Naive thymus-derived CD4-positive, alpha-beta T cell (primary cell): ENCODE measurements at regions of chr4 and their contacts with region 1.

Region 1: GRCh38 chr4:76213415-76214176 is at the start of gene SCARB2:
- DNase-seq: peak; percentile 72 to 78 (median 74)
- ATAC-seq: peak; percentile 82
- H3K4me3 ChIP-seq: peak within 1 kb of the TSS; percentile 76
- H3K4me3 Mint-ChIP-seq: peak within 1 kb of the TSS; percentile 87 to 96 (median 94)
- H3K27ac ChIP-seq: peak within 1 kb of the TSS; percentile 85
- H3K27ac Mint-ChIP-seq: peak within 1 kb of the TSS; percentile 89 to 97 (median 95)
- H3K4me1 ChIP-seq: peaks cover 21 to 39% of the 10 kb centered on the region in 2 donors
- H3K4me1 Mint-ChIP-seq: peaks cover 36 to 71% (median 66%) of the 10 kb centered on the region in 7 donors
- H3K27me3 ChIP-seq: no peaks in the 10 kb centered on the region
- H3K27me3 Mint-ChIP-seq: peaks cover 0 to 28% (median 0%) of the 10 kb centered on the region in 5 donors
- total RNA-seq, gene SCARB2: 13.5 to 35.7 (median 29.1) TPM

Region 2: GRCh38 chr4:75514131-75514948 is 699.3 kb before region 1 on chr4 and contains the starts of genes RCHY1 and THAP6:
- CTCF ChIA-PET with region 1: no interaction called
- POLR2A ChIA-PET with region 1: no interaction called
- intact Hi-C with region 1: loop called in 1 of 2 experiments (anchors 5 kb)
- DNase-seq: peak; percentile 82 to 95 (median 93)
- ATAC-seq: peak; percentile 92
- H3K4me3 ChIP-seq: peak within 1 kb of the TSS; percentile 79
- H3K4me3 Mint-ChIP-seq: peak within 1 kb of the TSS in 1 of 10 donors; percentile 97
- H3K27ac ChIP-seq: peak within 1 kb of the TSS; percentile 98
- H3K27ac Mint-ChIP-seq: peak within 1 kb of the TSS in 7 of 9 donors; percentile 96 to 100 (median 98)
- H3K4me1 ChIP-seq: peaks cover 53 to 56% of the 10 kb centered on the region in 2 donors
- H3K4me1 Mint-ChIP-seq: peaks cover 30 to 63% (median 49%) of the 10 kb centered on the region in 7 donors
- H3K27me3 ChIP-seq: no peaks in the 10 kb centered on the region
- H3K27me3 Mint-ChIP-seq: no peaks in the 10 kb centered on the region
- total RNA-seq, gene RCHY1: 23.0 to 37.8 (median 29.6) TPM
- total RNA-seq, gene THAP6: 18.2 to 43.9 (median 25.1) TPM

Region 3: DNA sequence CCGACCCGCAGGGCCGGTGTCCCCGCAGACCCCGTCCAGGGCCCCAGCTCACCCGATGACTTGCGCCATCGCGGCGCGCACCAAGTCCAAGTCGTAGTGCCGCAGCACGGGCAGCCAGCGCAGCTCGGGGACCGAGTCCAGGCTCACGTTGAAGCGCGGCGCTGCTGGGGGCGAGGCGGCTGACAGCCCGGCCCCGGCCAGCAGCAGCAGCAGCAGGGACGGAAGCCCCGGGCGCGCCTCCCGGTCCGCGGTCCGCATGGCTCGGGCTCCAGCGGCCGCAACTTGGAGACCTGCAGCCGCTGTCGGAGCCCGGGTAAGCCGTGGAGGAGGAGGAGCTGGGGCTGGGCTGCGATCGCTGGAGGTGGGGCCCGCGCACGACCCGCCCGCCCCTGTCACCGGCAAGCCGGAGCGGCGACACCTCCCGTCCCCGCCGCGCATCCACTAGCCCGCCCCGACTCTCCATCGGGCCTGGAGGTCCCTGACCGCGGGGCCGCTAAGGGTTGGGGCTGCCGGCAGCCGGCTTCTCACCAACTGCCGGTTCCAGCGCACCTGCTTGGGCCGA is 272.8 kb before region 1 on chr4 and contains the start of gene NAAA:
- CTCF ChIA-PET with region 1: no interaction called
- POLR2A ChIA-PET with region 1: no interaction called
- intact Hi-C with region 1: loop called in 1 of 2 experiments (anchors 2 kb)
- DNase-seq: peak; percentile 57 to 87 (median 75)
- ATAC-seq: peak; percentile 92
- H3K4me3 ChIP-seq: peak within 1 kb of the TSS; percentile 100
- H3K4me3 Mint-ChIP-seq: peak within 1 kb of the TSS; percentile 96 to 99 (median 98)
- H3K27ac ChIP-seq: peak within 1 kb of the TSS; percentile 80
- H3K27ac Mint-ChIP-seq: peak within 1 kb of the TSS; percentile 90 to 98 (median 94)
- H3K4me1 ChIP-seq: peaks cover 9 to 12% of the 10 kb centered on the region in 2 donors
- H3K4me1 Mint-ChIP-seq: peaks cover 12 to 34% (median 22%) of the 10 kb centered on the region in 7 donors
- H3K27me3 ChIP-seq: no peaks in the 10 kb centered on the region
- H3K27me3 Mint-ChIP-seq: no peaks in the 10 kb centered on the region
- total RNA-seq, gene NAAA: 36.9 to 103 (median 80.3) TPM

Region 4: DNA sequence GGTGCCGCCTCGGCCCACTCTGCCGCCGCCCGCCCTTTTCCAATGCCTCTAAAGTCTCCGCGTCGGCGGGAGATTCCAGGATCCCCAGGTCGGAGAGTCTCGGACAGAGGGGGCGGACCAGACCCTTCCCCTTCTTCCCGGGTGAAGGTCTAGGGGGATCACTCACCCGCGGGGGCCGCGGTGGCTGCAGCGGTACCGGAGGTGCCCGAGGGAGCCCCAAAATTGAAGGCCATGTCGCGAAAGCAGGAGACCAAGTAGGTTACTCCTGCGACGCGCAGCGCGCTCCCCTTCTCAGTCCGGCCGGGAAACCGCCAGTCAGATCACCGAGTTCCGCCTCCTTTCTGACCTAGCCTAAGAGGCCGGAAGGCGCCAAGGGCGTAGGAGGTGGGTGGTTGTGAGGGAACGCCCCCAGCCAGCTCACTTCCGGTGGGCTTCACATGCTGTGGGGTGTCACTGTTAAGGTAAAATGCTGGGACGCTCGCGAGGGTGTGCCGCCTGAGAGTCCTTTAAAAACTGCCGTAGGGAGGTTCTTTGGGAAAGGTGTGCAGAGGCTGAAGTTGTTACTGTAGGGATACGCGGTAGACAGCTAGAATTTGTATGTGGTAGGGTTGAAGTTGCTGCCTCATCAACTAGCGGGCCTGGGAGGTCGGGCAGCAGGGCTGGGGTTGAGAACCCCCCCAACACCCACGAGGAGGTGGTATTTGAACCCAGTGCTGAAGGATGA is 65.3 kb before region 1 on chr4 and contains the start of gene NUP54:
- CTCF ChIA-PET with region 1: interaction called, 3 read pairs
- POLR2A ChIA-PET with region 1: interaction called, 14 read pairs
- intact Hi-C with region 1: loop called (anchors 1 kb)
- DNase-seq: peak; percentile 85 to 96 (median 92)
- ATAC-seq: peak; percentile 99
- H3K4me3 ChIP-seq: peak within 1 kb of the TSS; percentile 85
- H3K4me3 Mint-ChIP-seq: peak within 1 kb of the TSS; percentile 90 to 100 (median 96)
- H3K27ac ChIP-seq: peak within 1 kb of the TSS; percentile 93
- H3K27ac Mint-ChIP-seq: peak within 1 kb of the TSS; percentile 91 to 99 (median 94)
- H3K4me1 ChIP-seq: peaks cover 12% of the 10 kb centered on the region in 2 donors
- H3K4me1 Mint-ChIP-seq: peaks cover 21 to 52% (median 45%) of the 10 kb centered on the region in 7 donors
- H3K27me3 ChIP-seq: no peaks in the 10 kb centered on the region
- H3K27me3 Mint-ChIP-seq: no peaks in the 10 kb centered on the region
- total RNA-seq, gene NUP54: 51.1 to 82.0 (median 65.5) TPM

Region 5: DNA sequence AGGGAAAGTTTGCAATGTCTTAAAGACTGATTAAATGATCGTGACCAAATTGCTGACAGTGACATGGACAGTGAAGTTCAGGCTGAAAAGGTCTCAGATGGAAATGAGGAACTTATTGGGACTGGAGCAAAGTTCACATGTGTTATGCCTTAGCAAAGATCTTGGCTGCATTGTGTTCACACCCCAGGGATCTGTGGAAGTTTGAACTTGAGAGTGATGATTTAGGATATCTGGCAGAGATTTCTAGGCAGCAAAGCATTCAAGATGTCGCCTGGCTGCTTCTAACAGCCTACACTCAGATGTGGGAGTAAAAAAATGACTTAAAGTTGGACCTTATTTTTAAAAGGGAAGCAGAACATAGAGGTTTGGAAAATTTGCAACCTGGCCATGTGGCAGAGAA is 21.4 kb before region 1 on chr4:
- CTCF ChIA-PET with region 1: no interaction called
- POLR2A ChIA-PET with region 1: no interaction called
- intact Hi-C with region 1: no loop called
- DNase-seq: no peak
- ATAC-seq: no peak
- H3K4me3 ChIP-seq: no peak overlapping the region
- H3K4me3 Mint-ChIP-seq: no peak overlapping the region
- H3K27ac ChIP-seq: no peak overlapping the region
- H3K27ac Mint-ChIP-seq: no peak overlapping the region
- H3K4me1 ChIP-seq: no peaks in the 10 kb centered on the region
- H3K4me1 Mint-ChIP-seq: peaks cover 1 to 14% (median 6%) of the 10 kb centered on the region in 7 donors
- H3K27me3 ChIP-seq: no peaks in the 10 kb centered on the region
- H3K27me3 Mint-ChIP-seq: no peaks in the 10 kb centered on the region

Region 6: GRCh38 chr4:76251441-76252270 is 38.1 kb after region 1 on chr4 and contains the start of gene FAM47E:
- CTCF ChIA-PET with region 1: no interaction called
- POLR2A ChIA-PET with region 1: no interaction called
- intact Hi-C with region 1: loop called in 1 of 2 experiments (anchors 1 kb)
- DNase-seq: peak; percentile 7 to 34 (median 26)
- ATAC-seq: peak; percentile 86
- H3K4me3 ChIP-seq: peak within 1 kb of the TSS; percentile 51
- H3K4me3 Mint-ChIP-seq: peak within 1 kb of the TSS; percentile 73 to 89 (median 82)
- H3K27ac ChIP-seq: no peak within 1 kb of the TSS
- H3K27ac Mint-ChIP-seq: peak within 1 kb of the TSS in 1 of 9 donors; percentile 32
- H3K4me1 ChIP-seq: no peaks in the 10 kb centered on the region
- H3K4me1 Mint-ChIP-seq: peaks cover 4 to 10% (median 7%) of the 10 kb centered on the region in 7 donors
- H3K27me3 ChIP-seq: peaks cover 9 to 11% of the 10 kb centered on the region in 2 donors
- H3K27me3 Mint-ChIP-seq: peaks cover 69 to 83% (median 75%) of the 10 kb centered on the region in 5 donors
- total RNA-seq, gene FAM47E: 0.24 to 0.79 (median 0.43) TPM in 4 of 5 experiments, not detected in the other

Region 7: DNA sequence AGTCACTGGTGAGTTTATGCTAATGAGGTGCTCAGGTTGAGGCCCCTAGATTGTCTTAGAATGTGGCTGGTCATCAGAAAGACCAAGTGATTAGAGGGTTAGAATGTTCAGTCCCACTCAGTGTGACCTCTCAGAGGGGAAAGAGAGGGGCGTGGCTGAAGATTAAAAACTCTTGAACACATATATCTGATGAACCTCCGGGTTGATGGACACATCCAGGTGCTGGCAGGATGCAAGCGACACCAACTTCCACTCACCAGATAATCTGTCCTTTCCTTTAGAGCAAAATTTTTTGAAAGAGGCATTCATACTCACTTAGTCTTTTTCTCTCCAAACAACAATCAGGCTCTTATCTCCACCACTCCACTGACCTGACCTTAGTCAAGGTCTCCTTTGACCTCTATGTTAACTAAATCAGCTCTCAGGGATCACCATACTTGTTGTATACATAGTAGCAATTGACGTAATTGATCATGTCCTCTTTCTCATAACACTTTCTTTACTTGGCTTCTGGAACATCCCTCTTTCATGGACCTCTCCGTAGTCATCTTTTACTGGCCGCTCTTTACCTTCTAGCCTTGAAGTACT is 52.1 kb after region 1 on chr4:
- CTCF ChIA-PET with region 1: no interaction called
- POLR2A ChIA-PET with region 1: no interaction called
- intact Hi-C with region 1: no loop called
- DNase-seq: no peak
- ATAC-seq: no peak
- H3K4me3 ChIP-seq: no peak overlapping the region
- H3K4me3 Mint-ChIP-seq: no peak overlapping the region
- H3K27ac ChIP-seq: no peak overlapping the region
- H3K27ac Mint-ChIP-seq: no peak overlapping the region
- H3K4me1 ChIP-seq: no peaks in the 10 kb centered on the region
- H3K4me1 Mint-ChIP-seq: no peaks in the 10 kb centered on the region
- H3K27me3 ChIP-seq: no peaks in the 10 kb centered on the region
- H3K27me3 Mint-ChIP-seq: peaks cover 0 to 23% (median 4%) of the 10 kb centered on the region in 5 donors

Region 8: DNA sequence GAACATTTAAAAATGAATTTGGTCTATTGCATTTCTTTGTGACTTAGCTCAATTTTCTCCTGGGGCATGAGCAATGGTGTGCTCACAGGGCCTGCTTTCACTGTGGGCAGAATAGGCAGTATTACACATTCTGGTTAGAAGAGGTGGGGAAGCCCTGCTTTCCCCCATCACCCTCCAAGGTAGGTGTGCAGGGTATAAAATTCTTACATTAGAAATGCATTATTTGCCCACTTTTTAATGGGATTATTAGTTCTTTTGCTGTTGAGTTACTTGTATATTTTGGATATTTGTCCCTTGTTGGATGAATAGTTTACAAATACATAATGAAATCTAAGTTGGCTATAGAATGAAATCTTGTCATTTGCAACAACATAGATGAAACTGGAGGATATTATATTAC is 84.6 kb after region 1 on chr4:
- CTCF ChIA-PET with region 1: no interaction called
- POLR2A ChIA-PET with region 1: no interaction called
- intact Hi-C with region 1: no loop called
- DNase-seq: no peak
- ATAC-seq: no peak
- H3K4me3 ChIP-seq: no peak overlapping the region
- H3K4me3 Mint-ChIP-seq: no peak overlapping the region
- H3K27ac ChIP-seq: no peak overlapping the region
- H3K27ac Mint-ChIP-seq: no peak overlapping the region
- H3K4me1 ChIP-seq: no peaks in the 10 kb centered on the region
- H3K4me1 Mint-ChIP-seq: peaks cover 0 to 32% (median 9%) of the 10 kb centered on the region in 7 donors
- H3K27me3 ChIP-seq: no peaks in the 10 kb centered on the region
- H3K27me3 Mint-ChIP-seq: peaks cover 0 to 12% (median 6%) of the 10 kb centered on the region in 5 donors

Region 9: GRCh38 chr4:77819843-77820648 is 1606.5 kb after region 1 on chr4:
- CTCF ChIA-PET with region 1: no interaction called
- POLR2A ChIA-PET with region 1: no interaction called
- intact Hi-C with region 1: loop called in 1 of 2 experiments (anchors 10 kb)
- DNase-seq: peak; percentile 95 to 99 (median 98)
- ATAC-seq: peak; percentile 87
- H3K4me3 ChIP-seq: peak overlapping the region; percentile 93
- H3K4me3 Mint-ChIP-seq: peak overlapping the region; percentile 93 to 99 (median 96)
- H3K27ac ChIP-seq: peak overlapping the region; percentile 100
- H3K27ac Mint-ChIP-seq: peak overlapping the region; percentile 88 to 100 (median 99)
- H3K4me1 ChIP-seq: peaks cover 39 to 42% of the 10 kb centered on the region in 2 donors
- H3K4me1 Mint-ChIP-seq: peaks cover 37 to 69% (median 53%) of the 10 kb centered on the region in 7 donors
- H3K27me3 ChIP-seq: no peaks in the 10 kb centered on the region
- H3K27me3 Mint-ChIP-seq: peaks cover 0 to 2% (median 0%) of the 10 kb centered on the region in 5 donors